Activated CD4-positive, alpha-beta memory T cell treated with anti-CD3 and anti-CD28 coated beads for 36 hours (primary cell): ENCODE measurements at regions of chr15 and their contacts with region 1.

Region 1: GRCh38 chr15:60585743-60586708 is 107.1 kb upstream of the ICE2 start:
- DNase-seq: peak; percentile 69
- H3K4me3 Mint-ChIP-seq: peak overlapping the region; percentile 63
- H3K27ac Mint-ChIP-seq: peak overlapping the region; percentile 67
- H3K4me1 Mint-ChIP-seq: peaks cover 78% of the 10 kb centered on the region
- H3K27me3 Mint-ChIP-seq: no peaks in the 10 kb centered on the region

Region 2: GRCh38 chr15:60362321-60363086 is 223.5 kb before region 1 on chr15:
- CTCF ChIA-PET with region 1: interaction called, 6 read pairs
- POLR2A ChIA-PET with region 1: no interaction called
- intact Hi-C with region 1: loop called (anchors 5 kb)
- DNase-seq: peak; percentile 72
- H3K4me3 Mint-ChIP-seq: no peak overlapping the region
- H3K27ac Mint-ChIP-seq: peak overlapping the region; percentile 63
- H3K4me1 Mint-ChIP-seq: peaks cover 25% of the 10 kb centered on the region
- H3K27me3 Mint-ChIP-seq: peaks cover 2% of the 10 kb centered on the region

Region 3: DNA sequence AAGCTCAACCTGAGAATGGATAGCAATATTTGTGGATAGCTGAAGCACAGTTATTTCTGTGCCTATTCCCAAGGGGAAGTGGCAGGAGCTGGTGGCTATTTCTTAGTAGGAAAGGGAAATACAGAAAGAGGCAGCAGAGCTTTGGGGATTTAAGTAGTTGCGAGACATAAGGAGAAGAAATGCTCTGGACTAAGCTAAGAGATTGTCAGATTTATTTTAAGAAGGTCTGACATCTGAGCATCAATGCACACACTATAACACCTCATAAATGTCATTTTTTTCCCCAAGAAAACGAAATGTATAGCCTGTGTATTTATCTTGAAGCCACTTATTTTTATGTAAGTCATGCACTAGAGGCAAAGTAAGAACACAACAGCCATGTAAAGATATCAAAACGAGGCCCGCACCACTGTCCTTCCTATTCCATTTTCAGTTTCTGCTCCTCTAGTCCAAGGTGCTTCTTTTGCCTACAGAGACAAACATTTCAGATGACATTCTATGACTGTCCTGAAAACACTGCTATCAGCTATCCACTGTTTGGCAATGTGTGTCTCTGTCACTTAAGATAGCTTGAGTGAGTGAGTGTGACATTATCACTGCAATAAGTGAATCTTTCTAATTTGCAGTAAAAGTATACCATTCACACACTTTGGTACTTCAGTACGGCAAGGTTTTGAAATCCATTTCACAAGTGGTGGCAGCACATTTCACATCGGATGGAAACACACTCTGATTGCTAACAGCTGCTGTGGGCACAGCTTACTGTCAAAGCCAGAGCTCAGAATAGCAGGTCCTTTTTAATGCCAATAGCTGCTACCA is 44.3 kb before region 1 on chr15:
- CTCF ChIA-PET with region 1: interaction called, 10 read pairs
- POLR2A ChIA-PET with region 1: interaction called, 9 read pairs
- intact Hi-C with region 1: no loop called
- DNase-seq: no peak
- H3K4me3 Mint-ChIP-seq: peak overlapping the region; percentile 4
- H3K27ac Mint-ChIP-seq: peak overlapping the region; percentile 83
- H3K4me1 Mint-ChIP-seq: peaks cover 95% of the 10 kb centered on the region
- H3K27me3 Mint-ChIP-seq: no peaks in the 10 kb centered on the region

Region 4: GRCh38 chr15:60649845-60650548 is 64.0 kb after region 1 on chr15:
- CTCF ChIA-PET with region 1: interaction called, 20 read pairs
- POLR2A ChIA-PET with region 1: no interaction called
- intact Hi-C with region 1: loop called (anchors 2 kb)
- DNase-seq: peak; percentile 68
- H3K4me3 Mint-ChIP-seq: peak overlapping the region; percentile 54
- H3K27ac Mint-ChIP-seq: peak overlapping the region; percentile 87
- H3K4me1 Mint-ChIP-seq: peaks cover 58% of the 10 kb centered on the region
- H3K27me3 Mint-ChIP-seq: no peaks in the 10 kb centered on the region

Region 5: DNA sequence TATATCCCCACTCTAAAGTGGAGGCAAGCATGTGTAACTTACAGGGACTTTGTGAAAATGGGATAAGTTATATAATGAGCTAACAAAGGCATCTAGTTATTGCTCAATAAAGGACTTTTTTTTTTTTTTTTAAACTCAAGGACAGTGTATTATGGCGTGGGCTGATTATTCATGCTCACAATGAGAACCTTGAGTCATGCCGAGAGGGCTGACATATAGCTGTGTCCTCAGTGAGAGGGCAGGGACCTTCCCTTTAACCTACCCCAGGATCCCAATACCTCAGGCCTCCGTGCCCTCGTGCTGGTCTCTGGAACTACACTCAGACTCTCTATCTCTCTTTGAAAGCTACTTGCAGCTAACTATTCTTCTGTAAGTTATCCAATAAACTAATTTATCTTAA is 212.8 kb after region 1 on chr15:
- CTCF ChIA-PET with region 1: interaction called, 14 read pairs
- POLR2A ChIA-PET with region 1: interaction called, 5 read pairs
- intact Hi-C with region 1: loop called (anchors 1 kb)
- DNase-seq: peak; percentile 84
- H3K4me3 Mint-ChIP-seq: peak overlapping the region; percentile 28
- H3K27ac Mint-ChIP-seq: peak overlapping the region; percentile 82
- H3K4me1 Mint-ChIP-seq: peaks cover 90% of the 10 kb centered on the region
- H3K27me3 Mint-ChIP-seq: no peaks in the 10 kb centered on the region

Region 6: DNA sequence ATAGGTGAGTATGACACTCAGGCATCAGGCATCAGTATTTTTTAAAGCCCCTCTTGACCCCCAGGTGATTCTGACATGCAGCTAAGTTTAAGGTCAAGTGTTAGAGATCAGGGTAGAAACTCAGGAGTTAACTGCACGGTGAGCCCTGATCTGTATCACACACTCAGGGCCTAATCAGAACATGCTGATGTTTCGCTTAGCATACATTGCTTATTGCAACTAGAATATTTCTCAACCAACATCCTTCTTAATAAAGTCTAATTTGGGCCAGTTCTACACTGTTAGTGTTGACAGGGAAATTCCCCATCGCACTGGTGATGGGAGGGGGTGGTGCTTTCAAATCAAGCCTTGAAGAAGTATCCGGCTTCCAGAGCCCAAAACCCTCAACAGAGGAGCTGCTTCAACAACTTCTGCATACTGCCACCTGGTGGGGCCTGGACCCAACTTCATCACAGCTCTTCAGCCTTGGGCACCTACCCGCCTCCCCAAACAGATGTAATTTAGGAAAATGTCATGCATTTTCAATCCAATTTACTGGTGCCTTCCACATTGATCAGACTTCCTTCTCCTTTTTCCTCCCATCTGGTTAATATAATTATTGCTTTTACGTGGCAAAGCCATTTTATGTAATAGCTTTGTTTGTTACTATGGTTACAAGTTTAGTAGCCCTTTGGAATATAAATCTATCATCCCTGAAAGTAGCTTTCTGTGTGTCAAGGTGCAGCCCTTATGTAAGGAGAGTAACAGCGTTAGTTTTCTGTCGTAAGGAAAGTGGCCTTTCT is 330.8 kb after region 1 on chr15:
- CTCF ChIA-PET with region 1: interaction called, 147 read pairs
- POLR2A ChIA-PET with region 1: interaction called, 5 read pairs
- intact Hi-C with region 1: loop called (anchors 1 kb)
- DNase-seq: peak; percentile 93
- H3K4me3 Mint-ChIP-seq: no peak overlapping the region
- H3K27ac Mint-ChIP-seq: peak overlapping the region; percentile 5
- H3K4me1 Mint-ChIP-seq: peaks cover 25% of the 10 kb centered on the region
- H3K27me3 Mint-ChIP-seq: peaks cover 3% of the 10 kb centered on the region